Cardiac septum (tissue), 1 donor: ENCODE measurements at regions of chr4 and their contacts with region 1.

Region 1: DNA sequence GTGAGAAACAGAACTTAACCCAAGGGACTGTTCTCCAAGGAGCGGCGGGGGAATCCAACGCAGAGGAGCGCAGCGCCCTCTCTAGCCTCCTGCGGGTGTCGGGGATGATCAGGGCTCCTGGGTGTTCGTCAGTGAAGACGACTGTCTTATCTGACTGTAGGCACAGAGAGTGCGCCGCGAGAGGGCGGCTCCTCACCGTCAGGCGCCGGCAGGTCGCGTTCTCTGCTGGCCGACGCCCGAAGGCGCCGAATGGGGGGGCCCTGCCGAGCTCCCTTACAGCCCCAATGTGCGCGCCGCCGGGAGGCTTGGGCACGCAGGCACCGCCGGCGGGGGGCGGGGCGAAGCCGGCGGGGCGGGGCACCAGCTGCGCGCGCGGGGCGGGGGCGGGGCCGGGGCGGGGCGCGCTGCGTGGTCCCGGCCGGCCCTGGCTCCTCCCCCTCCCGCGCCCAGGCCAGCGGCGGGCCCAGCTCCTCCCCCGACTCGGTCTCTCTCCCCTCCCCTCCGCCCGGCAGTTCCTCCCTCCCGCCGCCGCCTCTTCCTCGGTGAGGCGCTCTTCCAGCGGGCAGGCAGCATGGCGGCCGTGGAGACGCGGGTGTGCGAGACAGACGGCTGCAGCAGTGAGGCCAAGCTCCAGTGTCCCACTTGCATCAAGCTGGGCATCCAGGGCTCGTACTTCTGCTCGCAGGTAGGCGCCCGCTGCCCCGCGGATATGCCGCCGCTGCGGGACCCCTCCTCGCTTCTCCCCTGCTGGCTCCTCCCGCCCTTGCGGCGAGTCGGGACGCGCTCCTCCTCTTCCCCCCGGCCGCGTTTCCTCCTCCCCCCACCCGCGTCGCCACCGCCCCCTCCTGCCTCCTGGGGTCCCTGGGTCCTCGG is at the start of gene METAP1:
- DNase-seq: peak; percentile 97
- total RNA-seq, gene METAP1: 56.2 TPM

Region 2: GRCh38 chr4:98976694-98977310 is 18.6 kb before region 1 on chr4:
- intact Hi-C with region 1: no loop called
- DNase-seq: no peak

Region 3: DNA sequence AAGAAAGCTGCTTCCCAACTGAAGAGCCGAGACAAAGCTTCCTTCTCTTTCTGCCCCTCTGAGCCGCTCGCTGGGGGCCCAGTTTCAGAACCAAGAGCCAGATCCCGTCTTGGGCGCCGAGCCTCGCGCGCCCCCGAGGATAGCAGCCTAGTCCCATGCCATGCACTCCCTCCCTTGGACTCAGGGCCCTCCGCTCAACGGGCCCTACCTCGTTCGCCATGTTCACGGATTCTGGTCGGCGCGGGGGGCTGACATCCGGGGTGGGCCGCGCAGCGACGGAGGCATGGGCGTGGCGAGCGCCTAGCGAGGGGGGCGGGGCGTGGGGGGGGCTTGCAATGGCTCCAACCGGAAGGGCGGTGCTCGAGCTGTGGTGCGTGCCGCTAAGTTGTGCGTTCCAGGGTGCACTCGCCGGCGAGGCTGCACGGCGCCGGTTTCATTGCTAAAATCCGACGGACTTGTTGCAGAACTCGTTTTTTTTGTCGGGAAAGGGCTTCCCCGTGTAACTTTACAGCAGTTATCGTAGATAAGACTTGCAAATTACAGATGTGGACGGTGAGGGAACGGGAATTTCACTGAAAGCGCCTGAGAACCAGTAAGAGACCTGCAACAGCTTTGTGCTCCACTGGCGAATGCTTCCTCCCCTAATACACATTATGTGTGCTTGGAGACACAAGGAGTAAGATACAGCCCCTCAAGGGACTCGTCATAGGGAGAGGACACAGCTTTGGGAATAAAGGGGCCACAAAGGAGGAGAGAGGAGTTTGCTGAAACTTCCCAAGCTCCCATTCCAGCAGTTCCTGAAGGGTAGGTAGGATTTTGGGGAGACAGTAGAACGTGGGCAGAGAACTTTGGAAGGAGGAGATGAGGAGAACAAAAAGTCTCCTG is 93.3 kb after region 1 on chr4 and contains the start of gene ADH5:
- intact Hi-C with region 1: loop called (anchors 2 kb)
- DNase-seq: peak; percentile 92
- total RNA-seq, gene ADH5: 132 TPM